CD14-positive monocyte (primary cell): ENCODE measurements at regions of chrX and their contacts with region 1.

Region 1: GRCh38 chrX:119606280-119607015 is at the start of gene NKRF:
- DNase-seq: peak; percentile 89 to 91 (median 89)
- H3K4me3 ChIP-seq: peak within 1 kb of the TSS; percentile 78 to 86 (median 83)
- H3K4me3 Mint-ChIP-seq: peak within 1 kb of the TSS; percentile 95 to 97
- H3K27ac ChIP-seq: peak within 1 kb of the TSS; percentile 71 to 91
- H3K27ac Mint-ChIP-seq: peak within 1 kb of the TSS; percentile 97 to 99 (median 99)
- H3K4me1 ChIP-seq: peaks cover 11 to 14% of the 10 kb centered on the region in 2 donors
- H3K4me1 Mint-ChIP-seq: peaks cover 18% of the 10 kb centered on the region
- H3K27me3 ChIP-seq: no peaks in the 10 kb centered on the region
- H3K27me3 Mint-ChIP-seq: peaks cover 0 to 35% (median 0%) of the 10 kb centered on the region in 3 donors
- CTCF ChIP-seq: no peak
- polyA plus RNA-seq, gene NKRF: 1.3 to 4.7 (median 2.4) TPM

Region 2: DNA sequence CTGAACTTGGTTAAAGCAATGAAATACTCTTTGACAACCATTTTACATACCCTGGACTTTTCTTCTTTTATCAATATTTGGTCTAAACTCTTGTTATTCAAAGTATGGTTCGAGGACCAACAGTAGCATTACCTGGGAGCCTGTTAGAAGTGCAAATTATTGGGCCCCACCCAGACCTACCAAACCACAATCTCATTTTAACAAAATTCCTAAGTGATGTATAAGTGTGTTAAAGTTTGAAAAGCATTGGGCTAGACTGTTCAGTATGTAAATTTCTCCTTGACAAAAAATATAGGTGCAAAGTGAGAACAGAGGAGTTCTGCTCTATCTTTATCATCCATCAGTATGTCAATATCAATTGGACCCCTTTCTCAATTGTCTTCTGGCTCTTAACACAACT is 303.3 kb before region 1 on chrX:
- intact Hi-C with region 1: no loop called
- DNase-seq: no peak
- H3K4me3 ChIP-seq: no peak overlapping the region
- H3K4me3 Mint-ChIP-seq: no peak overlapping the region
- H3K27ac ChIP-seq: no peak overlapping the region
- H3K27ac Mint-ChIP-seq: no peak overlapping the region
- H3K4me1 ChIP-seq: no peaks in the 10 kb centered on the region
- H3K4me1 Mint-ChIP-seq: no peaks in the 10 kb centered on the region
- H3K27me3 ChIP-seq: no peaks in the 10 kb centered on the region
- H3K27me3 Mint-ChIP-seq: peaks cover 0 to 2% (median 0%) of the 10 kb centered on the region in 3 donors
- CTCF ChIP-seq: no peak

Region 3: DNA sequence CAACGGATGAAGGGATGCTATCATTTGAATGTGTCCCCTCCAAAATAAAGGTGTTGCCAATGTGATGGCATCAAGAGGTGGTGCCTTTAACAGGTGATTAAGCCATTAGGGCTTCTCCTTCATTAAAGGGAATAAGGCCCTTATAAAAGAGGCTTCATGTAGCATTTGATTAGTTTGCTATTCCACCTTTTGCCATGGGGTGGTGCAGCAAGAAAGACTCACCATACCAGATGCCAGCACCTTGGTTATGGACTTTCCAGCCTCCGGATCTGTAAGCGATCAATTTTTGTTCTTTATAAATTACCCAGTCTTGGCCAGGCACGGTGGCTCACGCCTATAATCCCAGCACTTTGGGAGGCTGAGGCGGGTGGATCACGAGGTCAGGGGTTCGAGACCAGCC is 215.2 kb before region 1 on chrX:
- intact Hi-C with region 1: no loop called
- DNase-seq: no peak
- H3K4me3 ChIP-seq: no peak overlapping the region
- H3K4me3 Mint-ChIP-seq: no peak overlapping the region
- H3K27ac ChIP-seq: no peak overlapping the region
- H3K27ac Mint-ChIP-seq: no peak overlapping the region
- H3K4me1 ChIP-seq: no peaks in the 10 kb centered on the region
- H3K4me1 Mint-ChIP-seq: no peaks in the 10 kb centered on the region
- H3K27me3 ChIP-seq: no peaks in the 10 kb centered on the region
- H3K27me3 Mint-ChIP-seq: no peaks in the 10 kb centered on the region
- CTCF ChIP-seq: peak; percentile 22

Region 4: GRCh38 chrX:119775517-119776238 is 169.2 kb after region 1 on chrX:
- intact Hi-C with region 1: loop called in 1 of 2 experiments (anchors 10 kb)
- DNase-seq: peak; percentile 59 to 82 (median 78)
- H3K4me3 ChIP-seq: peak overlapping the region in 1 of 3 experiments; percentile 59
- H3K4me3 Mint-ChIP-seq: peak overlapping the region in 1 of 2 donors; percentile 78
- H3K27ac ChIP-seq: peak overlapping the region; percentile 83 to 85
- H3K27ac Mint-ChIP-seq: peak overlapping the region; percentile 82 to 92 (median 90)
- H3K4me1 ChIP-seq: peaks cover 34 to 35% of the 10 kb centered on the region in 2 donors
- H3K4me1 Mint-ChIP-seq: peaks cover 37% of the 10 kb centered on the region
- H3K27me3 ChIP-seq: no peaks in the 10 kb centered on the region
- H3K27me3 Mint-ChIP-seq: peaks cover 0 to 3% (median 2%) of the 10 kb centered on the region in 3 donors
- CTCF ChIP-seq: no peak